ENCODE measurements at regions of chr1 and their contacts with region 1.

Region 1: DNA sequence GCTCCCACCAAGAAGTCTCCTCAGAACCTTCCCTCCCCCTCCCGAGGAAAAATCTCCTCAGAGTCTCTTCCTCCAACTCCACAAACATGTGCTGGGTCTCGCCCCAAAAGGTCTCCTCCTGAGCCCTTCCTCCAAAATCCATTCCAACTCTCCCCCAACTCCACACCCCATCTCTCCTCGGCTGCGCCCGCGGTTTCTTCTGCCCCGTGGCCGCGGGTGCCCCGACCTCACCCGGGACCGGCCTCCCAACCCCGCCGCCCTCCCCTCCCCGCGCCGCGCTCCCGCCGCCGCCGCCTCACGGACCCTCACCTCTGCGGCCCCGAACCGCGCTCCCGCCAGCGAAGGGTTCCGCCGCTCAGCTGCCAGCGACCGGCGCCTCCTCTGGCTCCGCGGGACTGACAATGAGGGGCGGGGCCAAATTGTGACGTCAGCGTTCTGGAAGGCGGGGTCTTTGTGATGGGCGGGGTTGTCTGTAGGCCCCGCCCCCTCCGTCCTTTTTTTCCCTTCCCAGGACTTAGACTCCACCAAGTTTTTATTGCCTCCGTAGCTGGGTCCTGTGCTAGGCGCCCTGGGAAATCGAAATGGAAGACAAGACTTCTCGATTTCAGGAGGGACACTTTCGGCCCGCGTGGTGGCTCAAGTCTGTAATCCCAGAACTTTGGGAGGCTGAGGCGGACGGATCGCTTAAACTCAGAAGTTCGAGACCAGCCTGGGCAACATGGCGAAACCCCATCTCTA is at the start of gene LUZP1:
- DNase-seq: peak; percentile 92
- ATAC-seq: peak; percentile 94 to 95
- total RNA-seq, gene LUZP1: 31.7 to 55.7 TPM

Region 2: DNA sequence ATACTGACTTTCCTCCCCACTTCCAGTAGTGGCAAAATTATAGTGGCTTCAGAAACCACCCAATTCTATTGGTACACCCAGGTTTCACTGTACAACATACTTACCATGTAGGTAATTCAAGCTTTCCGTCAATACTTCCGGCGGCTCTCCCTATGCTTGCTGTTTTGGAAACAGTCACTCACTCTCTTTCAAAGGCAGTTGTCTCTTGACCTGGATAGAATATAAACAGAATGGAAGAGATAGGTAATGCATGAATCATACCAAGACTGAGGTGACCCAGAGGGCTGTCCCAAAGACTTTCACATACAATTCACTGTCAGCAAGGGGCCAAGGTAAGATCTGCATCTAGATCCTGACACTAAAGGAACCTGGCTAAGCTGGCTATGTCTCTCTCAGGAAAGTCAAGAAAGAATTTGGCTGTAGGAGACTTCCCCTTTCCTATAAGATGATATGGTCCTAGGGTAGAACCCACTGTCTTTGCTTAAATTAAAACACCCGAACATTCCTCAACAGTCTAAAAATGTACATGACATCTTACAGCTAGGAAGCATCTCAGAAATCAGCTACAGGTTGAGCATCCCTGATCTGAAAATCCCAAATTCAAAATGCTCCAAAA is 59.6 kb before region 1 on chr1:
- intact Hi-C with region 1: loop called in 1 of 2 experiments (anchors 5 kb)
- DNase-seq: no peak
- ATAC-seq: no peak

Region 3: DNA sequence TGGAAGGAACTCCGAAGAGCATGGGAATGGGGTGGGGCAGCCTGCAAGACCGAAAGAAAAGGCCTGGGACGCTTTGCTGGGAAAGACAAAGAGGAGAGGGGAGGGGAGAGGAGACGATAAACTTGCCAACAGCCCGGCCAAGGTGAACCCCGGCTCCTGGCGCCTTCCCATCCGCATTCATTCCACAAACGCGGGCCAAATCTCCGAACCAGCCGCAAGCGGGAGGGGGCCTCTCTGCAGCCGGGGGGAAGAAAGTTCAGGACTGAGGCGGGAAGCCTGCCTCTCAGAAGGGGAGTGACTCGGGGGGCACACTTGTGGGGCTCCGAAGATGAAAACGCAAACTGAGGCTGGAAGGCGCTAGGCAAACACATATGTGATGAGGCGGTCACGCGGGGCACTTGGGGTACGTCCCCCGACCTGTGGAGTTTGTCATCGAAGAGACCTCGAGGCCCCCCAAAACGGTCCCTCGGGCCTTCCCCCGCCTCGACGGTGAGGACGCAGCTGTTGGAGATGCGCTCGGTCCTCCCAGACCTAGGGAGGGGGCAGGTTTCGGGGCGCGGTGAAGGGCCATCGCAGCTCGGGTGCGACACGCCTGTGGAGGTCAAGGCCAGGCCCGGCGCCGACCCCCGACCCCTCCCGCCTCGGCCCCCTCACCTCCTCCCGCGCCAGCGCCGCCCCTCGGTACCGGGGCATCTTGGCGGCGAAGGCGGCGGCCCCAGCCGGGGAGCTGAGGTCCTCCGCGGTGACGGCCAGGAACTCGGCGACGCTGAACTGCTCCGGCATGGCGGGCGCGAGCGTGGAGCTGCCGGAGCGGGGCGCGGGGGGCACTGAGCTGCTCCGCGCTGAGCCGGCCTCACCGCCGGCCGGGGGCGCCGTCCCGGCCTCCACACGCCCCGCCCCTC is 315.0 kb after region 1 on chr1 and contains the start of gene ASAP3:
- intact Hi-C with region 1: no loop called
- DNase-seq: peak; percentile 58
- ATAC-seq: peak; percentile 4 to 6
- total RNA-seq, gene ASAP3: 36.4 to 39.9 TPM

Measured in left cardiac atrium (tissue), 4 donors.